ENCODE measurements at regions of chr15 and their contacts with region 1.

Region 1: GRCh38 chr15:59611276-59612260 is at the start of gene GCNT3:
- DNase-seq: peak; percentile 96 to 97
- ATAC-seq: peak; percentile 93 to 95
- H3K4me3 ChIP-seq: peak within 1 kb of the TSS; percentile 65
- H3K27ac ChIP-seq: peak within 1 kb of the TSS; percentile 95 to 96
- H3K4me1 ChIP-seq: peaks cover 39% of the 10 kb centered on the region
- CTCF ChIP-seq: no peak
- EP300 ChIP-seq: peak in 1 of 2 experiments; percentile 45; a peak in 1 of 5 replicates
- POLR2A ChIP-seq: peak; percentile 30
- RAD21 ChIP-seq: 0 out of 5 replicates have a peak, but pooled peaks of 1 of the 2 experiments have one; percentile 20
- polyA plus RNA-seq, gene GCNT3: 134 and 153 TPM in 2 replicates

Region 2: GRCh38 chr15:59160880-59161593 is 450.5 kb before region 1 on chr15:
- CTCF ChIA-PET with region 1: no interaction called
- POLR2A ChIA-PET with region 1: no interaction called
- DNase-seq: peak; percentile 41 to 59
- ATAC-seq: peak; percentile 81 to 84
- H3K4me3 ChIP-seq: no peak overlapping the region
- H3K27ac ChIP-seq: peak overlapping the region in 1 of 2 experiments; percentile 22; a peak in 1 of 6 replicates
- H3K4me1 ChIP-seq: peaks cover 6% of the 10 kb centered on the region
- CTCF ChIP-seq: peak; percentile 62
- EP300 ChIP-seq: no peak
- POLR2A ChIP-seq: no peak
- RAD21 ChIP-seq: peak; percentile 76 to 87

Region 3: GRCh38 chr15:59594493-59594942 is 17.1 kb before region 1 on chr15:
- CTCF ChIA-PET with region 1: interaction called, 25 read pairs
- POLR2A ChIA-PET with region 1: interaction called, 57 read pairs
- DNase-seq: peak; percentile 97 to 98
- ATAC-seq: peak; percentile 94 to 95
- H3K4me3 ChIP-seq: no peak overlapping the region
- H3K27ac ChIP-seq: peak overlapping the region; percentile 86 to 92
- H3K4me1 ChIP-seq: peaks cover 40% of the 10 kb centered on the region
- CTCF ChIP-seq: no peak
- EP300 ChIP-seq: peak in 1 of 2 experiments; percentile 47; a peak in 1 of 5 replicates
- POLR2A ChIP-seq: no peak
- RAD21 ChIP-seq: peak; percentile 15 to 42; a peak in 3 of 5 replicates

Region 4: GRCh38 chr15:59632714-59633113 is 21.1 kb after region 1 on chr15:
- CTCF ChIA-PET with region 1: interaction called, 12 read pairs
- POLR2A ChIA-PET with region 1: interaction called, 5 read pairs
- DNase-seq: peak; percentile 54 to 68
- ATAC-seq: peak; percentile 90
- H3K4me3 ChIP-seq: no peak overlapping the region
- H3K27ac ChIP-seq: no peak overlapping the region
- H3K4me1 ChIP-seq: peaks cover 7% of the 10 kb centered on the region; the same call in 1 of the 3 replicates
- CTCF ChIP-seq: peak; percentile 63
- EP300 ChIP-seq: no peak
- POLR2A ChIP-seq: no peak
- RAD21 ChIP-seq: peak; percentile 64 to 84

Region 5: DNA sequence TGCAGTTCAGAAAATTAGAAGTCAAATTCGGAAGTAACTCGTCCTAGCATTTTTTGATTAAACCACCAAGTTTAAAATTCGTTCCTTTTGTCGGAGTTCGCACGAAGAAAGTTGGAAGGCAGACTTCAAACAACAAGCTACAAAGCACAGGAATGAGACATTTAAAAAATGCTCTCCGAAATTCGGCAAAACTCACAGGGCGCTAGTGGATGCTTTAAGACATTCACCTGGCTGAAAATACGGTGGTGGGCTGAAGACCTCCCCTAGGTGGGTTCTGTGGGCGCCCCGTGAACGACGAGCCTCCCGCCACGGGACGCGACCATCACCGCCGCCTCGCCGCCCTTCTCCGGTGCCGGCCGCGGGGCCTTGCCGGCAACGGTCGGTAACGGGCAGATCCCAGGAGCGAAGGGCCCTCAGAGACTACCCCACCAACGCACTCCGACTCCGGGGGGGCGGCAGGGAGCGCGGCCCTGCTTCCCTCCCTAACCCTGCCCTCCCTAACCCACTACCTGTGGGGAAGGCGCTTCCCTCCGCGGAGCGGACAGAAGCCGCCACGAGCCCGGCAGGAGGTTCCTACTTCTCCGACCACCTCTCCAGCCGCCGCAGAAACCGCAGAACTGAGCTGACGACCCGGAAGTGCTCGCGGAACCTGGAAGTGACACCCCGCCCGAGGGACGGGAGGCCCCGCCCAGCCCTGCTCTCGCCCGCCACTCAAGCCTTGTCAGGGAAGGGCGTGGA is 45.5 kb after region 1 on chr15 and contains the start of gene GTF2A2:
- CTCF ChIA-PET with region 1: interaction called, 3 read pairs
- POLR2A ChIA-PET with region 1: interaction called, 22 read pairs
- DNase-seq: peak; percentile 95 to 96
- ATAC-seq: peak; percentile 98 to 100
- H3K4me3 ChIP-seq: peak within 1 kb of the TSS; percentile 95
- H3K27ac ChIP-seq: peak within 1 kb of the TSS; percentile 91 to 93
- H3K4me1 ChIP-seq: peaks cover 12% of the 10 kb centered on the region
- CTCF ChIP-seq: no peak
- EP300 ChIP-seq: no peak
- POLR2A ChIP-seq: peak; percentile 83
- RAD21 ChIP-seq: 0 out of 5 replicates have a peak, but pooled peaks of 1 of the 2 experiments have one; percentile 11
- polyA plus RNA-seq, gene GTF2A2: 137 and 220 TPM in 2 replicates

Region 6: GRCh38 chr15:59976480-59977271 is 365.1 kb after region 1 on chr15:
- CTCF ChIA-PET with region 1: no interaction called
- POLR2A ChIA-PET with region 1: no interaction called
- DNase-seq: no peak
- ATAC-seq: no peak
- H3K4me3 ChIP-seq: no peak overlapping the region
- H3K27ac ChIP-seq: no peak overlapping the region
- H3K4me1 ChIP-seq: no peaks in the 10 kb centered on the region
- CTCF ChIP-seq: no peak
- EP300 ChIP-seq: no peak
- POLR2A ChIP-seq: no peak
- RAD21 ChIP-seq: no peak

Measured in A549 (cell line).